ENCODE measurements at regions of chr15 and their contacts with region 1.

Region 1: DNA sequence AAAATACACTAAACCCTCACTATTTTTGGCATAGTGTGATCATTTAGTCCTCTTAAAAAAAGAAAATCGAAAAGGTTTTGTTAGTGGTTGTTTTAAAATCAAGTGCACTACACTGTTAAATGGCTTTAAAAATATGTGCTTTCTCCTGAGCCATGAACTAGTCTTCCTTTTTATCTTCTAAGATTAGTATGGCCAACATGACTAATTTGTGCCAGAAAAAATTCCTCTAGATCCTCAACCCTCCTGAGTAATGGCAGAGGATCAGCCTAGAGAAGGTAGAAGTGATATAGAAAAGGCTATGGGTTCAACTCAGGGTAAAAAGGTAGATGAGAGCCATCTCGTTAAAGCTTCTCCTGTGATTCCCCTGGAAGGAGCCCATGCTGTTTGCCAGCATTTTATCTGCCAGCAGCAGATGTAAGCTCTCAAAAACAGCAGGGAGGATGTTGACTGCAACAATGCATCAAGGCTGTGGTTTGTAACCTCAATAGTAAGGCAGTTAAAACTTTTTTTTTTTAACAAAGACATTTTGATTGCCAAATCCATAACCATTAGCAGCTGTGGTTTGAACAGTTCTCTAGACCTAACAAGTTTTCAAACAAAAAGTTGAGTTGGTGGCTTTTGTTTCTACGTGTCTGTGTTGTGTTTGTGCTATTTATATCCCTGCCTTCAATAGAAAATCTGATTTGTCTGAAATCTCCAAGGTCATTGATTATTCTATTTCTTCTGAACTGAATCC is 30.2 kb upstream of the ZNF609 start:
- DNase-seq: peak; percentile 52
- H3K4me3 Mint-ChIP-seq: peak overlapping the region; percentile 48
- H3K27ac Mint-ChIP-seq: peak overlapping the region; percentile 85
- H3K4me1 Mint-ChIP-seq: peaks cover 33% of the 10 kb centered on the region
- H3K27me3 Mint-ChIP-seq: no peaks in the 10 kb centered on the region

Region 2: DNA sequence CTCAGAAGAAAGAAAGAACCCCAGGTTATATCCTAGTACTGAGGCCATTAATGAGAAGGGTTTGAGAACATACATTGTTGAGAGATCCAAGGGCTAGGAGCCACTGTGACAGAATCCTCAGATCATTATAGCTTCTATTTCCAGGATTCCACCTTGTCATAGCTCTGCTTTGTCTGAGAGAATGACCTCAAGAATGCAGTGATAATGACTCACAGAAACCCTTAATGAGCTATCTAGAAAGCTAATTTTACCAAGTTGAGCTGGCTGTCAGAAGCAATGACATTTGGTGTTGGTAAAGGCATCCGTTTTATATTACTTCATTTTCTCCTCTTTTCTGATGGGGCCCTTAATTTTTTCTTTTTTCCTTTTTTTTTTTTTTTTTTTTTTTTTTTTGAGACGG is 31.6 kb before region 1 on chr15:
- intact Hi-C with region 1: no loop called
- DNase-seq: no peak
- H3K4me3 Mint-ChIP-seq: no peak overlapping the region
- H3K27ac Mint-ChIP-seq: no peak overlapping the region
- H3K4me1 Mint-ChIP-seq: no peaks in the 10 kb centered on the region
- H3K27me3 Mint-ChIP-seq: no peaks in the 10 kb centered on the region

Region 3: GRCh38 chr15:64443747-64444621 is 13.8 kb after region 1 on chr15:
- intact Hi-C with region 1: loop called (anchors 1 kb)
- DNase-seq: no peak
- H3K4me3 Mint-ChIP-seq: peak overlapping the region; percentile 77
- H3K27ac Mint-ChIP-seq: peak overlapping the region; percentile 97
- H3K4me1 Mint-ChIP-seq: peaks cover 45% of the 10 kb centered on the region
- H3K27me3 Mint-ChIP-seq: no peaks in the 10 kb centered on the region

Region 4: GRCh38 chr15:64460206-64460734 is 30.1 kb after region 1 on chr15 and contains the start of gene ZNF609:
- intact Hi-C with region 1: loop called (anchors 1 kb)
- DNase-seq: peak; percentile 86
- H3K4me3 Mint-ChIP-seq: peak within 1 kb of the TSS; percentile 87
- H3K27ac Mint-ChIP-seq: peak within 1 kb of the TSS; percentile 82
- H3K4me1 Mint-ChIP-seq: peaks cover 68% of the 10 kb centered on the region
- H3K27me3 Mint-ChIP-seq: no peaks in the 10 kb centered on the region
- total RNA-seq, gene ZNF609: 50.9 and 60.2 TPM in 2 replicates

Region 5: GRCh38 chr15:64478863-64479262 is 48.7 kb after region 1 on chr15:
- intact Hi-C with region 1: no loop called
- DNase-seq: no peak
- H3K4me3 Mint-ChIP-seq: no peak overlapping the region
- H3K27ac Mint-ChIP-seq: no peak overlapping the region
- H3K4me1 Mint-ChIP-seq: peaks cover 28% of the 10 kb centered on the region
- H3K27me3 Mint-ChIP-seq: no peaks in the 10 kb centered on the region

Region 6: DNA sequence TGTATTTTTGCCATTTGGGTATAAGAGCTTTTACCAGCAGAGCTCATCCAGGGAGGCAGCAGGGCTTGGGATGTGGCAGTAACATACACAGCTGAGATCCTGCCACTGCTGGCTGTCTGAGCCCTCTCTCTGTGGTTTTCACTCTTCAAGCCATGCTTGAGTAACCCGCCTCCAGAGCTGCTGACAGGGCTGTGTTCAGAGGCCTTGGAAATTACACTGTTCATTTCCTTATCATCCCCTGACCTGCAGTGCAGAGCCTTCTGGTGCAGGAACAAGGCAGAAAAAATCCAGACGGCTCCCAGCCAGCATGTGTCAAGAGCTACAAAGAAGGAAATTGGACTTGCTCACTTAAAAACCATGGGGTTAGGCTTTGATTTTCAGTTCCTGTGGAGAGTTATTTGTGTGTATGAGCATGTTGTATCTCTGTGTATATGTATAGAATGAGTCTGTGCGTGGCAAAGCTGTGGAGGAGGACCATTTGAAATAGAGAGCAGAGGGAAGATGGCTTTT is 77.2 kb after region 1 on chr15:
- intact Hi-C with region 1: loop called (anchors 5 kb)
- DNase-seq: no peak
- H3K4me3 Mint-ChIP-seq: no peak overlapping the region
- H3K27ac Mint-ChIP-seq: peak overlapping the region; percentile 66
- H3K4me1 Mint-ChIP-seq: peaks cover 53% of the 10 kb centered on the region
- H3K27me3 Mint-ChIP-seq: no peaks in the 10 kb centered on the region

Region 7: GRCh38 chr15:64651573-64652260 is 221.5 kb after region 1 on chr15:
- intact Hi-C with region 1: loop called (anchors 5 kb)
- DNase-seq: no peak
- H3K4me3 Mint-ChIP-seq: no peak overlapping the region
- H3K27ac Mint-ChIP-seq: peak overlapping the region; percentile 7
- H3K4me1 Mint-ChIP-seq: peaks cover 27% of the 10 kb centered on the region
- H3K27me3 Mint-ChIP-seq: no peaks in the 10 kb centered on the region

Region 8: GRCh38 chr15:64731012-64731806 is 301.0 kb after region 1 on chr15:
- intact Hi-C with region 1: loop called (anchors 5 kb)
- DNase-seq: peak; percentile 72
- H3K4me3 Mint-ChIP-seq: no peak overlapping the region
- H3K27ac Mint-ChIP-seq: no peak overlapping the region
- H3K4me1 Mint-ChIP-seq: peaks cover 10% of the 10 kb centered on the region
- H3K27me3 Mint-ChIP-seq: peaks cover 2% of the 10 kb centered on the region